ENCODE measurements at regions of chr2 and their contacts with region 1.

Region 1: GRCh38 chr2:219119422-219120043 is 41.1 kb downstream of the NHEJ1 start:
- DNase-seq: peak; percentile 66

Region 2: GRCh38 chr2:219057709-219058540 is 61.6 kb before region 1 on chr2:
- CTCF ChIA-PET with region 1: interaction called, 13 read pairs
- POLR2A ChIA-PET with region 1: no interaction called
- DNase-seq: peak; percentile 85

Region 3: GRCh38 chr2:219073413-219074129 is 46.0 kb before region 1 on chr2:
- CTCF ChIA-PET with region 1: interaction called, 37 read pairs
- POLR2A ChIA-PET with region 1: no interaction called
- DNase-seq: peak; percentile 70

Region 4: DNA sequence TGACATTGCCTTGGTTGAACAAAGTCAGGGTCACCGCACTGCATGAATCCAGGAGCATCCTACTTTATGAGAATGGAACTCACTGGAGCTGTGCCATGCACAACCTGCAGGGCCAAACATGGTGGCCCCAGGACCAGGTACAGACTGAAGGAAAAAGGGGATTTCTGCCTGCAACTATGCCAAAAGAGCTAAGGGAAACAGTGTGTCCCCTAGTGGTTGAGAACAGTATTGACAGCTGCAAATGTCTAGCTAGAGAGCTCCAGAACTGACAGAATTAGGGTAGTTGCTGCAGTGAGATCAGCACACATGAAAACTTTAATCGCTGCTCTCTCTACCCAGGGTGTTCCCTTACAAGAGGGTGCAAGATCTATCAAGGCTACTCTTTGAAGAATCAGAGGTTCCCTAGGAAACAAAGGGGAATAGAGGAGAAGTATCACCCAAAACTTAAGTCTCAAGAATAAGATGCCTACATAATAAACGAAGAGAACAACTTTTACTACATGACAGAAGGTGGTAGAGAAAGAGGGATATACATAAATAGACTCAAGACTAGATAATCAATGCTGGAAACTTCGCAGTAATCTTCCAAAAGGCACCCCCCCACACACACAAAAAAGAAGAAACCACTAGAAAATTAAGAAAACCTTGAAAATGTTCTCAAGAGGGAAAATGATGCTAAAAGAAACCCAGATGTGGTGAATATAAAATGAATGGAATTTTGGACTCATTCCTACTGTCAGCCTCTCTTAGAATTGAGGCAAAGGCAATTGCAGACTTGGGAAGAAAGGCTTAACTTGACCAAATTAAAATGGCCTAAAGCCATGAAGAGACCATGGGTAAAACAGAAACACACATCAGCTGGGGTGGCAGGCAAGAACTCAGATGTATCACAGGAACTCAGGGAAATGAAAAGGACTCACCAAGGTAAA is 15.2 kb before region 1 on chr2:
- CTCF ChIA-PET with region 1: interaction called, 13 read pairs
- POLR2A ChIA-PET with region 1: no interaction called
- DNase-seq: peak; percentile 63

Measured in HEK293T (cell line).